ENCODE measurements at regions of chr19 and their contacts with region 1.

Region 1: DNA sequence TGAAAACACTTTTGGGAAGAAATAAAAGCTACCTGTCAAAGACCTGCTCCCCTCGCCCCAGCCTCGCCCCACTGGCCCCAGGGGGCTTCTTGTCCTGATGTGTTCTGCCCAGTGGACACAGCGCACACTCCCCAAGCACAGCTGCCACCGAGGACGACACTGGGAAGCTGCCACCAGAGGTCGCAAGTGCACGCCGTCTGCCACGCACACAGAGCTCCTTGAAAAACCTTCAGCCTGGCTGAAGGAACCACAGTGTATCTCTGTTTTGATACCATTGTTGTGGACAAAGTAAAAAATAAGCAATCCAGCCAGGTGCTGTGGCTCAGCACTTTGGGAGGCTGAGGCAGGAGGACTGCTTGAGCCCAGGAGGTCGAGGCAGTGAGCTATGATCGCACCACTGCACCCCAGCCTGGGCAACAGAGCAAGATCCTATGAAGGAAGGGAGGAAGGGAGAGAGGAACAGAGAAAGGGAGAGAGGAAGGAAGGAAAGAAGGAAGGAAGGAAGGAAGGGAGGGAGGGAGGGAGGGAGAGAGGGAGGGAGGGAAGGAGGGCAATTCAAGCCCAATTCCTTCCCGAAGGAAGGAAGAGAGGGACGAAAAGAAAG is 57.3 kb downstream of the CEBPG start:
- DNase-seq: peak; percentile 44
- H3K4me3 ChIP-seq: no peak overlapping the region
- H3K27ac ChIP-seq: no peak overlapping the region
- H3K4me1 ChIP-seq: no peaks in the 10 kb centered on the region
- H3K27me3 ChIP-seq: no peaks in the 10 kb centered on the region
- CTCF ChIP-seq: peak; percentile 80 to 91

Region 2: DNA sequence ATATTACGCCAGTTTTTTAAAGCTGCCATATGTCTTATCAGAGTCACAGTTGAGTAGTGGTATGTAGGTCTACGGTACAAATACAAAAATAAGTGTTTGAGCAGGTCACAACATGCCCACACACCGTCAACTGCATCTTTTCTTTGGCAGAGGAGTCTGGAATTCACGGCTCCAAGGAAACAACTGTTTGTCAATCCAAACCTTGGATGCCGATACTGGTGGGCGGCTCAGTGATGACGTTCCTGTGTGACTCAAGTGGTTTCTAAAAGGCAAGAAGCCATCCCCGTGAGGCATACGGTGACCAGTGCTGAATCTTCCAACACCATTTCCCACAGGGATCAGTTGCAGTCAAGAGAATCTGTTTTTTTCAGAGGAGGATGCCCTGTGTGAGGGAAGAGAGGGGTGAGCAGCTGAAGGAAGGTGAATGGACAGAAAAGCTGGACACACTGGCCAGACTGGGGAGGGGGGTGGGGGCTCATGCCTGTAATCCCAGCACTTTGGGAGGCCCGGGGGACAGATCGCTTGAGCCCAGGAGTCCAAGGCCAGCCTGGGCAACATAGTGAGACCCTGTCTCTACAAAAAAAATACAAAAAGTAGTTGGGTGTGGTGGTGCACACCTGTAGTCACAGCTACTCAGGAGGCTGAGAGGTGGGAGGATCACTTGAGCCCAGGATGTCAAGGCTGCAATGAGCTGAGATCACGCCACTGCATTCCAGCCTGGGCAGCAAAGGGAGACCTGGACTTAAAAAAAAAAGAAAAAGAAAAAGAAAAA is 80.1 kb before region 1 on chr19:
- CTCF ChIA-PET with region 1: no interaction called
- dilution Hi-C with region 1: no loop called
- in situ Hi-C with region 1: no loop called
- intact Hi-C with region 1: no loop called
- DNase-seq: peak; percentile 100
- H3K4me3 ChIP-seq: peak overlapping the region in 1 of 3 experiments; percentile 6
- H3K27ac ChIP-seq: peak overlapping the region; percentile 81
- H3K4me1 ChIP-seq: peaks cover 17% of the 10 kb centered on the region
- H3K27me3 ChIP-seq: no peaks in the 10 kb centered on the region
- CTCF ChIP-seq: no peak

Region 3: GRCh38 chr19:33468271-33469170 is 37.7 kb after region 1 on chr19:
- CTCF ChIA-PET with region 1: no interaction called
- dilution Hi-C with region 1: no loop called
- in situ Hi-C with region 1: no loop called
- intact Hi-C with region 1: no loop called
- DNase-seq: no peak
- H3K4me3 ChIP-seq: no peak overlapping the region
- H3K27ac ChIP-seq: no peak overlapping the region
- H3K4me1 ChIP-seq: no peaks in the 10 kb centered on the region
- H3K27me3 ChIP-seq: no peaks in the 10 kb centered on the region
- CTCF ChIP-seq: no peak

Region 4: DNA sequence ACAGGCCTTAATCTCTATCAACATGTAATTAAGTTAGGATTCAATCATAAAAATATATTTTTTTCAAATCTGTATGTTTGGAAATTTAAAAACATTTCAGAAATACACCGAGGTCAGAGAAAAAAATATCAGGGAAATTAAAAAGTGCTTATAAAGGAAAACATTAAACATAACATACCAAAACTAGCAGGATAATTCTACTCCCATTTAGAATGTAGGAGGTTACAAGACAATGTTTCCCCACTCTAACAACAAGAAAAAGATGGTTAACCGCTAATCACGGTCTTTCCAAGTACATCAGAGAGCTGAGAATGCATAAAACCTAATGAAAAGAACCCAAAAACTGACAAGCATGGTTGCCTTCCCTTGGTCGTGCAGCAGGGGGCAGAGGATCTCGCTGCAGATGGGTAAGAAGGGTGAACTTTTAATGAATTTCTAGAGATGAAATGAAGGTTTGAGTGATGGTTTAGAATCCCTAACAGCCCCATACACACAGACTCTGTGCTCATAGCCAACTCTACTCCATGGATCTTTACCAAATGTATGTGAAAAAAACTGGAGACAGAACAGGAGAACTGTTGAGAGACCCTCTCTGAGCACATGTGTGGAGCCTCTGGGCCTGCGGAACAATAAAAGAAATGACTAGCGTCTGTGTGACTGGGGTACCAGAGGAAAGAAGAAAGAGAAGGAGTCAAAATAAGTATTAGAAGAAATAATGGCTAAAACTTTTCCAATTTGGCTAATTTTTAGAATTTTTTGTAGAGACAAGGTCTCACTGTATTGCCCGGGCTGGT is 690.3 kb after region 1 on chr19:
- CTCF ChIA-PET with region 1: no interaction called
- dilution Hi-C with region 1: no loop called
- in situ Hi-C with region 1: loop called in 1 of 2 experiments (anchors 25 kb)
- intact Hi-C with region 1: no loop called
- DNase-seq: peak; percentile 26
- H3K4me3 ChIP-seq: no peak overlapping the region
- H3K27ac ChIP-seq: no peak overlapping the region
- H3K4me1 ChIP-seq: no peaks in the 10 kb centered on the region
- H3K27me3 ChIP-seq: no peaks in the 10 kb centered on the region
- CTCF ChIP-seq: peak; percentile 79 to 80

Measured in mammary epithelial cell (primary cell).